ENCODE measurements at regions of chr15 and their contacts with region 1.

Region 1: DNA sequence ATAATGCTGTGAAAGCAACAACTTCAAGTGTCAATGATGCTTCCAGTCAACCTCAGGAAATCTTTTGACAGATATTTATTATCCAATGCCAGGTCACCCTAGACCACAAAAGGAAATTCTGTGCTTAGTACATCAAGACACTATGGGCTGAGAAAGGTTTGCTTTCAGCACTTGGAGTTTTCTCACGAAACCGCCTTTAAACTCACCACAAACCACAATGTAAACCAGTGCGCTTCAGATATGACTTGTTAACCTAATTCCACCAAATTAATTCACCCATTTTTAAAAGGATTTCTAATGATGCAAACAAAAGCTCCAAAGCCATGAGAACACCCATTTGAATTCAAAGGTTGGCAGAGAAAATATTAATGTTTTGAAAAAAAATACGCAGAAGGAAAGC is 292.9 kb upstream of the NR2F2 start:
- DNase-seq: no peak
- ATAC-seq: no peak
- H3K4me3 ChIP-seq: no peak overlapping the region
- H3K4me3 Mint-ChIP-seq: no peak overlapping the region
- H3K27ac ChIP-seq: no peak overlapping the region
- H3K27ac Mint-ChIP-seq: no peak overlapping the region
- H3K4me1 ChIP-seq: peaks cover 4 to 7% of the 10 kb centered on the region in 2 donors
- H3K4me1 Mint-ChIP-seq: peaks cover 0 to 17% (median 4%) of the 10 kb centered on the region in 7 donors
- H3K27me3 ChIP-seq: peaks cover 0 to 9% of the 10 kb centered on the region in 2 donors
- H3K27me3 Mint-ChIP-seq: peaks cover 59 to 83% (median 74%) of the 10 kb centered on the region in 5 donors

Region 2: GRCh38 chr15:95995375-95996168 is 42.0 kb before region 1 on chr15:
- CTCF ChIA-PET with region 1: no interaction called
- POLR2A ChIA-PET with region 1: no interaction called
- intact Hi-C with region 1: loop called in 1 of 2 experiments (anchors 5 kb)
- DNase-seq: no peak
- ATAC-seq: no peak
- H3K4me3 ChIP-seq: no peak overlapping the region
- H3K4me3 Mint-ChIP-seq: peak overlapping the region in 4 of 10 donors; percentile 5 to 44 (median 11)
- H3K27ac ChIP-seq: no peak overlapping the region
- H3K27ac Mint-ChIP-seq: no peak overlapping the region
- H3K4me1 ChIP-seq: peaks cover 7 to 15% of the 10 kb centered on the region in 2 donors
- H3K4me1 Mint-ChIP-seq: peaks cover 7 to 33% (median 21%) of the 10 kb centered on the region in 7 donors
- H3K27me3 ChIP-seq: no peaks in the 10 kb centered on the region
- H3K27me3 Mint-ChIP-seq: peaks cover 20 to 36% (median 31%) of the 10 kb centered on the region in 5 donors

Region 3: GRCh38 chr15:97059281-97059680 is 1021.7 kb after region 1 on chr15:
- CTCF ChIA-PET with region 1: no interaction called
- POLR2A ChIA-PET with region 1: no interaction called
- intact Hi-C with region 1: no loop called
- DNase-seq: no peak
- ATAC-seq: no peak
- H3K4me3 ChIP-seq: no peak overlapping the region
- H3K4me3 Mint-ChIP-seq: no peak overlapping the region
- H3K27ac ChIP-seq: no peak overlapping the region
- H3K27ac Mint-ChIP-seq: no peak overlapping the region
- H3K4me1 ChIP-seq: no peaks in the 10 kb centered on the region
- H3K4me1 Mint-ChIP-seq: no peaks in the 10 kb centered on the region
- H3K27me3 ChIP-seq: no peaks in the 10 kb centered on the region
- H3K27me3 Mint-ChIP-seq: no peaks in the 10 kb centered on the region

Measured in naive thymus-derived CD4-positive, alpha-beta T cell (primary cell).